Mammary epithelial cell (primary cell): ENCODE measurements at regions of chr17 and their contacts with region 1.

Region 1: DNA sequence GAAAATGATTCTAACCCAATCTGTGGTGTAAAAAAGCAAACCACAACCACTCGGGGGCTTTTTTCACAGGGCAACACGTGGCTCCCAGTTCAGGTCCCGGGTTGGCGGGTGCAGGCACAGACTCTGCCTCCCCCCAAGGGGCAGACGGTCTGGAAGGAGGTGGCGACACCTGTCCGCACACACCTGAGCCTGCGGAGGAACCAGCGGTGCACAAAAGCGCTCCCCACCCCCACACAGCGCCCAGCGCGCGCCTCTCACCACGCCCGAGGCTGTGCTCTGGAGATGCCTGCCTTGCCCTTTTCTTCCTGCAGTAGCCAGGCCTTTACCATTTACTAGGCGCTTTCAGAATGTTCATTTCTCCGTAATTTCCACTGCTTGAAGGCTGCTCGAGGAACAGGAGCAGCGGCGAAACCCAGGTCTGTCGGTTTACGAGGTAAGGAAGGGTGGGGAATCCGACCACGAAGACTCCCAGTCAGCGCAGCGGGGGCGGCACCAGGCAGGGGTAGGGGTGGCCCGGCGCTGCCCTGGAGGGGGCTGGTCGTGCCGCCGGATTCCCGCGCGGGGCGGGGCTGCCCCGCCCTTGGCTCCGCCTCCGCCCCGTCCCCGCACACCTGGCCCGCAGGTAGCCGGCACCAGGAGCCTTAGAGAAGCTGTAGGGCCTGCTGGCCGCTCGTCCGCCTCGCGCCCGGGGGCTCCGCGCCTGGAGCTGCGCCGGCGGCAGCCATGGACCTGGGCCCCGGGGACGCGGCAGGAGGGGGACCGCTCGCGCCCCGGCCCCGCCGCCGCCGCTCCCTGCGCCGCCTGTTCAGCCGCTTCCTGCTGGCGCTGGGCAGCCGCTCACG is at the start of gene USP43:
- DNase-seq: peak; percentile 81
- H3K4me3 ChIP-seq: peak within 1 kb of the TSS; percentile 63 to 79 (median 69)
- H3K27ac ChIP-seq: peak within 1 kb of the TSS; percentile 88
- H3K4me1 ChIP-seq: peaks cover 25% of the 10 kb centered on the region
- H3K27me3 ChIP-seq: no peaks in the 10 kb centered on the region
- CTCF ChIP-seq: peak in 1 of 2 donors; percentile 13
- total RNA-seq, gene USP43: 8.0 to 9.3 TPM

Region 2: GRCh38 chr17:9668517-9668916 is 23.4 kb after region 1 on chr17:
- CTCF ChIA-PET with region 1: no interaction called
- dilution Hi-C with region 1: no loop called
- in situ Hi-C with region 1: no loop called
- intact Hi-C with region 1: loop called (anchors 1 kb)
- DNase-seq: peak; percentile 94
- H3K4me3 ChIP-seq: no peak overlapping the region
- H3K27ac ChIP-seq: peak overlapping the region; percentile 45
- H3K4me1 ChIP-seq: peaks cover 22% of the 10 kb centered on the region
- H3K27me3 ChIP-seq: no peaks in the 10 kb centered on the region
- CTCF ChIP-seq: no peak

Region 3: DNA sequence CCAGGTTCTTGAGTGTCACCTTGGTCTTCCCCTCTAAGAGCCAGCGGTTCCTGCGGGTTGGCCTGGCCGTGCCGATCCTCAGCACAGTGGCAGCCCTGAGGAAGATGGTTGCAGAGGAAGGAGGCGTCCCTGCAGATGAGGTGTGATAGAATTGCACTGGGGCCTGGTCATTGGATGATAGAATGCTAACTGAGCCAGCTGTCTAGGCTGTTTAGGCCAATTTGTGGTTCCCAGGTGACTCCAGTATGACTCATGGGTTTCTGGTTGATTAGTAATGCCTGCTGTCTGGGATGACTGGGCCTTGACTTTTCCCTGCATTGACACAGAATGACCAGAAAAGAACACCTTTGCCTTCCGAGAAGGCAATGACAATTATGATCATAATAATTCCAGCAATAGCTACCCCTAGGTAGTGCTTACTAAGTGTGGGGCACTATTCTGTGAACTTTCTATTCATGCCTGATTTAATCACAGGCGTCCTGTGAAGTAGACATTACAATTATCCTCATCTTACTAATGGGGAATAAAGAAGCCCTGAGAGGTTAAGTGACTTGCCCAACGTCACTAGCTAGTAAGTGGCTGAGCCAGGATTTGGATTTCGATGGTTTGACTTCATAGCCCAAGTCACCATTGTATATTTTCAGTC is 31.7 kb after region 1 on chr17:
- CTCF ChIA-PET with region 1: no interaction called
- dilution Hi-C with region 1: no loop called
- in situ Hi-C with region 1: no loop called
- intact Hi-C with region 1: loop called (anchors 2 kb)
- DNase-seq: peak; percentile 99
- H3K4me3 ChIP-seq: no peak overlapping the region
- H3K27ac ChIP-seq: peak overlapping the region; percentile 87
- H3K4me1 ChIP-seq: peaks cover 18% of the 10 kb centered on the region
- H3K27me3 ChIP-seq: no peaks in the 10 kb centered on the region
- CTCF ChIP-seq: no peak